G401 (cell line): ENCODE measurements at regions of chr14 and their contacts with region 1.

Region 1: DNA sequence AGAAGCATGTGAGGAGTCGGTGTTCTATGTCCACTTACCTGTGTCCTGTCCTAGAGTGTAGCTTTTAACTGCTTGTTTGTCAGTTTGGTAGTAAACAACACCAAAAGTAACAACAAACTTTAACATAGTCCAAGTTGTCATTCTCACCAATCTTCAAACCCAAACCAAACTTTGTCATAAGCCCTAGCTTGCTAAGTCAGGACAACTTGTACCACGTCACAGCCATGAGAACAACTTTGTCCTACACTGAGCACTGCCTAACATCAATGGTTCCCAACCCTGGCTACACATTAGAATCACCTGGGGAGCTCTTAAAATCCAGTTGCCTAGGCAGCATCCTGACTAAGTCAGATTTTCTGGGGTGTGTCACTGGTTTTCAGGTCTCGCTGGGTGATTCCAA is 309.3 kb downstream of the RPS29 start:
- DNase-seq: no peak

Region 2: DNA sequence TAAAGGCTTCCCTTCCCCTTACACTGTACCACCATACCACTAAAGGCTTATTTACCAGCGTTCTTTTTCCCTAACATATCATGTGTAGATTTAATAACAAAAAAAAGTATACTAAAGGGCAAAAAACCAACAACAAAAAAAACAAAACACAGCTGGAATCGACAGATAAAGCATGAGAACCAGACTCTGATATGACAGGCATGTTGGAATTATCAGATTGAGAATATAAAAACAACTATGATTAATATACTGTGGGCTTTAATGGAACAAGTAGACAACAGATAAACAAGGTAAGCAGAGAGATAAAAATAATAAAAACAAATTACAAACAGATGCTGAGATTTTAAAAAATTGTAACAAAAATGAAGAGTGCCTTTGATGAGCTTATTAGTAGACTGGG is 847.4 kb before region 1 on chr14:
- in situ Hi-C with region 1: loop called (anchors 10 kb)
- DNase-seq: no peak

Region 3: GRCh38 chr14:49218436-49219092 is 58.3 kb before region 1 on chr14:
- in situ Hi-C with region 1: no loop called
- DNase-seq: no peak